PC-3 (cell line): ENCODE measurements at regions of chr1 and their contacts with region 1.

Region 1: GRCh38 chr1:3900119-3900968 is at the start of gene C1orf174:
- DNase-seq: peak; percentile 97
- ATAC-seq: peak; percentile 76
- H3K4me3 ChIP-seq: peak within 1 kb of the TSS; percentile 80
- H3K27ac ChIP-seq: peak within 1 kb of the TSS; percentile 85
- H3K4me1 ChIP-seq: peaks cover 10% of the 10 kb centered on the region
- H3K27me3 ChIP-seq: no peaks in the 10 kb centered on the region
- CTCF ChIP-seq: no peak
- total RNA-seq, gene C1orf174: 64.2 and 70.9 TPM in 2 replicates

Region 2: DNA sequence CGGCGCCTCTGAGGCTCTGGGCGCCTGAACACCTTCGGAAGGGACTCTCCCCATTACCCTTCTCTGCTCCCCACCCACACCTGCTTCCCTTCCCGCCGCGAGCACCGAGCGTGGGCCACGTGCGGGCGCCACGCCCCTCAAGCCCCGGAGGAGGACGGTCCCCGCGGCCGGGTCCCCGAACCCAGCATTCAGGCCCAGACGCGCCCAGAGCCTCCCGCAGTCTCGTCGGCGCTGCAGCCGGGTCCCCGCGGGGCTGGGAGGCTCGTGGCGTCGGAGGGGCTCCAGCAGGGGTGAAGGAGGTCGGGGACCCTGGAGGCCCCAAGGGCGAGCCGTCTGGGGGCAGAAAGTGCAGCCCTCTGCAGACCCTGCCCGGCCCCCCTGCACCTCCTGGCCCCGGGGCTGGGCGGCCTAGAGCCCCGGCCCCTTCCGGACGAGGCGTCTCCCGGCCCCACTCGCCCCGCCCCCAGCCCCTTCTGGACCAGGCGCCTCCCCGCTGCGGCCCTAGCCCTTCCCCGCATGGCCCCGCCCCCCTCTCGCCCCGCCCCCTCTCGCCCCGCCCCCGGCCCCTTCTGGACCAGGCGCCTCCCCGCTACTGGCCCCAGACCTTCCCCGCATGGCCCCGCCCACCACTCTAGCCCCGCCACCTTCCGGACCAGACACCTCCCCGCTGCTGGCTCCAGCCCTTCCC is 128.2 kb before region 1 on chr1:
- CTCF ChIA-PET with region 1: no interaction called
- POLR2A ChIA-PET with region 1: no interaction called
- intact Hi-C with region 1: no loop called
- DNase-seq: peak; percentile 89
- ATAC-seq: peak; percentile 79
- H3K4me3 ChIP-seq: peak overlapping the region; percentile 82
- H3K27ac ChIP-seq: no peak overlapping the region
- H3K4me1 ChIP-seq: peaks cover 13% of the 10 kb centered on the region; the same call in 1 of the 2 replicates
- H3K27me3 ChIP-seq: 0 out of 2 replicates have a peak, but pooled peaks cover 2% of the 10 kb centered on the region
- CTCF ChIP-seq: no peak

Region 3: DNA sequence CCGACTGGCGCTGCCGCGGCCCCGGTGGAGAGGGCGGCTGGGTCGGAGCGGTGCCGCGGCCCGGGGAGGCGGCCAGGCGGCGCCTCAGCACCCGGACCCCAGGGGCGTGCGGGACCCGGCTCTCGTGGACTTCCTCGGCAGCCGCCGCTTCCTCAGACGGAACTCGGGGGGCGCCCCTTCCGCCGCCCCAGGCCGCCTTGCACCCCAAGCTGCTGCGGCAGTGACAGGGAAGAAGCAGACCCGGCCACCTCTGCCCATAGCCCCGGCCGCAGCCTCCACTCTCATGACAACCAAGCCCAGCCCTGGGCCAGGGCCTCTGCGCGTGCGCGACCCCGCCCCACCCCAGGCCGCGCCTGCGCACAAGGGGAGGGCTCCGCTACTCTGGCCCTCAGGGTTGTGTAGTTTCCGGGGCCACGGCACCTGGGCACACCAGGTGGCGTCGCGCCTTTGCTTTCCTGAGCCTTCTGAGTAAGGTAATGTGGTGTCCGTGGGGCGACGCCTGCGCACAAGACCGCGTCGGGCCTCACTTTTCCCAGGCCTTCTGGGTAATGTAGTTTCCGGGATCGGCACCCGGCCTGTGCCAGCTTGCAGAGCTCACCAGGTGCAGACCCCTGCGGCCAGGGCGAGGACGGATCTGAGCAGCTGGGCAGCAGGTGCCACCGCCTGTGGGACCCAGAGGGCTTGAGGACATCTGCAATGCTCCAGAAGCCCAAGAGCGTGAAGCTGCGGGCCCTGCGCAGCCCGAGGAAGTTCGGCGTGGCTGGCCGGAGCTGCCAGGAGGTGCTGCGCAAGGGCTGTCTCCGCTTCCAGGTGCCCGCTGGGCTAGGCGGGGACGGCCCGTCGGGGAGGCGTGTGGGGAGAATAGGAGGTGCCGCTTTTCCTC is 43.2 kb before region 1 on chr1 and contains the starts of genes CEP104 and DFFB:
- CTCF ChIA-PET with region 1: no interaction called
- POLR2A ChIA-PET with region 1: interaction called, 5 read pairs
- intact Hi-C with region 1: loop called (anchors 1 kb)
- DNase-seq: peak; percentile 100
- ATAC-seq: peak; percentile 91
- H3K4me3 ChIP-seq: peak within 1 kb of the TSS; percentile 83
- H3K27ac ChIP-seq: no peak within 1 kb of the TSS
- H3K4me1 ChIP-seq: peaks cover 18% of the 10 kb centered on the region
- H3K27me3 ChIP-seq: no peaks in the 10 kb centered on the region
- CTCF ChIP-seq: peak; percentile 62
- total RNA-seq, gene CEP104: 60.9 and 64.1 TPM in 2 replicates
- total RNA-seq, gene DFFB: 17.1 and 19.6 TPM in 2 replicates

Region 4: DNA sequence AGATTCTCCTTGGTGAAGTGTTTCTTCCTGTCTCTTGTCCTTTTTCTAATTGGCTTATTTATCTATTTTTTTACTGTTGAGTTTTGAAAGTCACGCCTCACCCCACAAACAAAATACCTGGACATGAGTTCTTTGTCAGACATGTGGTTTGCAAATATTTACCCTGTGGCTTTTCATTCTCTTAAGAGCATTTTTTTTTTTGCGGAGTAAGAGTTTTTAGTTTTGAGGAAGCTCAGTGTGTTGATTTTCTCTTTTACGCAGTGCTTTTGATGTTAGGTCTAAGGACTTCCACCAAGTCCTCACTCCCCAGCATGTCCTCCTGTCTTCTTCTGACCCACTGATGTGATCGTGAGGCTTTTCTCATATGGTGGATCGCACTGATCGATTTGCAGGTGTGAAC is 35.5 kb before region 1 on chr1:
- CTCF ChIA-PET with region 1: interaction called, 10 read pairs
- POLR2A ChIA-PET with region 1: no interaction called
- intact Hi-C with region 1: no loop called
- DNase-seq: peak; percentile 74
- ATAC-seq: peak; percentile 78
- H3K4me3 ChIP-seq: no peak overlapping the region
- H3K27ac ChIP-seq: no peak overlapping the region
- H3K4me1 ChIP-seq: peaks cover 12% of the 10 kb centered on the region
- H3K27me3 ChIP-seq: no peaks in the 10 kb centered on the region
- CTCF ChIP-seq: no peak

Region 5: DNA sequence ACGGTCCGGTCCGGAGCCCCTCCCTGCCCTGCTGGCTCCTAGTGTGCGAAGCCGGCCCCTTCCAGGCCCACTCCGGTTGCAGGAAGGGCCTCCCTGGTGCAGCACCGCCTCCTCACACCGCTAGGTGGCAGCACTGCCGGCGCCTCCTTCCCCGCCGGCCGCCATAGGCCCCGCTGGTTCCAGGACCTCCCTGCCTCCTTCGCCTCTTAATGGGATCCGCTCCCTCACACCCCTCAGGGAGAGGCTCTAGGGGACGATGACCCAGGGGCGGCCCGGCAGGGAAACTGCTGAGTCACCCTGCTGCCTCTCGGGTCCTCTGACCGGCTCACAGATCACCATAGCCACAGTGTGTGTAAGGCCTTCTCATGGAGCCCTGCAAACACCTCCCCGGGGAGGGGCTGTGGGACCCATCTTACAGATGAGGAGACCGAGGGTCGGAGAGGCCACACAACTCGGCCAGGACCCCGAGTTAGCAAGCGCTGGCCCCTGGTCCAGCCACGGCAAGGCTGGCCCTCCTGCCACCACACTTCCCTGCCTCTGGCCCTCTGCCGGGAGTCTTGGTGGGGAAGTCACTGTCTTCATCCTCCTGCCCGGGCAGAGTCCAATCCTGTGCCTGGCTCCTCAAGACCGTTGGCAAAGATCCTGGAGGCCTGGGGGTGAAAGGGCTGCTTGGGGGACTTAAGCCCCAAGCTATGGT is 752.4 kb after region 1 on chr1:
- CTCF ChIA-PET with region 1: no interaction called
- POLR2A ChIA-PET with region 1: no interaction called
- intact Hi-C with region 1: loop called (anchors 10 kb)
- DNase-seq: peak; percentile 53
- ATAC-seq: peak; percentile 82
- H3K4me3 ChIP-seq: no peak overlapping the region
- H3K27ac ChIP-seq: no peak overlapping the region
- H3K4me1 ChIP-seq: peaks cover 12% of the 10 kb centered on the region; the same call in 1 of the 2 replicates
- H3K27me3 ChIP-seq: peaks cover 22% of the 10 kb centered on the region
- CTCF ChIP-seq: peak; percentile 92